ENCODE measurements at regions of chr6 and their contacts with region 1.

Region 1: GRCh38 chr6:7312616-7313504 is at the start of gene SSR1:
- DNase-seq: peak; percentile 97 to 98 (median 97)
- H3K4me3 ChIP-seq: peak within 1 kb of the TSS; percentile 65
- H3K27ac ChIP-seq: peak within 1 kb of the TSS; percentile 49 to 95
- H3K4me1 ChIP-seq: peaks cover 7% of the 10 kb centered on the region
- H3K27me3 ChIP-seq: no peaks in the 10 kb centered on the region
- CTCF ChIP-seq: no peak
- EP300 ChIP-seq: peak; percentile 19
- POLR2A ChIP-seq: peak; percentile 83
- total RNA-seq, gene SSR1: 42.3 to 166 (median 123) TPM

Region 2: DNA sequence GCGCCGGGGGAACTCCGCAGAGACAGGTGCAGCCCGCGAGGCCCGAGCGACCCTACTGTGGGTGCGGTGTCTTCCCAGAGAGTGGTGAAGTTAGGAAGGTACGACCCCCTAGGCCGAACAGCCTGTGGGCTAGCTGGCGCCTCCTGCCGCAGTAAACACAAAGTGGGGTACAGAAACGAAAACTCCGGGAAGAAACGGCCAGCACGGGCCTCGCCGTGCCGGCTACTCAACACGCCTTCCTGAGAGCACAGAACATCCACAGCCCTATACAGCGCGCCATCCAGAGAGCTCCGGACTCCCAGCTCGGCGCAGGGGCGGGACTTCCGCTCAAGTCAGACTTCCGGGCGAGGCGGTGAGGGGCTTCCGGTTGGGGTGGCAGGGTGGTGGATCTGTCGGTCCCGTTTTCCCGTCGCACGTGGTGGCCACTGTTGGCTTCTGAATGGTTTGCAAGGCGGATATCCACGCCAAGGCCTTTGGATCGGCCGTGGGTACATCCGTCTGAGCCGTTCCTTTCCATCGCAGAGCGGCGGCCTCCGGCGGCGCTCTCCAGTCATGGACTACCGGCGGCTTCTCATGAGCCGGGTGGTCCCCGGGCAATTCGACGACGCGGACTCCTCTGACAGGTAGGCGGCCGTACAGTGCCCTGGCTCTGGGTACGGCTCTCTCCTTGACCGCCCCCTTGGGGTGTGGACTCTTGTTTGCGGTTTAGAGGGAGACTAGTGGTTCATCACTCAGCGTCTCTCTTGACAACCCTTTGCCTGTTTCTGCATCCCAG is 76.8 kb after region 1 on chr6 and contains the starts of genes CAGE1 and RIOK1:
- intact Hi-C with region 1: loop called in 1 of 4 experiments (anchors 5 kb)
- DNase-seq: peak; percentile 91 to 96 (median 92)
- H3K4me3 ChIP-seq: peak within 1 kb of the TSS; percentile 51
- H3K27ac ChIP-seq: peak within 1 kb of the TSS; percentile 18 to 73
- H3K4me1 ChIP-seq: peaks cover 5% of the 10 kb centered on the region
- H3K27me3 ChIP-seq: no peaks in the 10 kb centered on the region
- CTCF ChIP-seq: no peak
- EP300 ChIP-seq: no peak
- POLR2A ChIP-seq: peak; percentile 65
- total RNA-seq, gene CAGE1: not detected
- total RNA-seq, gene RIOK1: 11.2 to 33.2 (median 18.5) TPM

Region 3: GRCh38 chr6:8435160-8435852 is 1122.4 kb after region 1 on chr6 and contains the start of gene SLC35B3:
- intact Hi-C with region 1: loop called in 1 of 4 experiments (anchors 10 kb)
- DNase-seq: peak; percentile 93 to 98 (median 97)
- H3K4me3 ChIP-seq: peak within 1 kb of the TSS; percentile 85
- H3K27ac ChIP-seq: peak within 1 kb of the TSS in 1 of 2 donors; percentile 69
- H3K4me1 ChIP-seq: peaks cover 5% of the 10 kb centered on the region
- H3K27me3 ChIP-seq: no peaks in the 10 kb centered on the region
- CTCF ChIP-seq: no peak
- EP300 ChIP-seq: no peak
- POLR2A ChIP-seq: peak; percentile 78
- total RNA-seq, gene SLC35B3: 4.6 to 13.8 (median 9.9) TPM